ENCODE measurements at regions of chr12 and their contacts with region 1.

Region 1: DNA sequence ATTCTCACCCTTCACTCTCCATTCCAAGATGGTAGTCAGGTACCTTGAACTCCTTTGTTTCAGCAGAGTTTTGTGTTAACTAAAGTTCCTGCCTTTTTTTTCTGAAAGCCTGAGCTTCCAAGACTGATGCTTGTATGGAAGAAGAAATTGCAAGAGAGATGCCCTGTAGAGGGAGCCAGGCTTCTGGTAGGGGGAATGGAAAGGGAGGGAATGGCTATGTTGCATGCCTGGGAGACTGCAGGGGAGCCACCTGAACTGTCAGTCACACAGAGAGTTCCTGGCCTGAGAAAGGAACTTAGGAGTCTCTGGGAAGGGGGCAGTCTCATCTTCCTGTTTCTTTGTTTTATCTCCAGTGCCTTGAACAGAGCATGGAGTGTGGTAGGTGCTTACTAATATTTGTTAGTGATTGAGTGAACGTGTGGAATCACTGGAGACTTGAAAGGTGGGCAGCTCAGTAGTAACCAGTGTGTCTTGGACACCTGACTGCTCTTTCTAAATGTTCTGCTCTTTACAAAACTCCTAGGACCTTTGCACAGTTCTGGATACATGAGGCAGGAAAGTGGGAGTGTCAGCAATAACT is 132.2 kb downstream of the ANO4 start:
- DNase-seq: peak; percentile 54
- H3K4me3 Mint-ChIP-seq: no peak overlapping the region
- H3K27ac Mint-ChIP-seq: no peak overlapping the region
- H3K4me1 Mint-ChIP-seq: peaks cover 13% of the 10 kb centered on the region
- H3K27me3 Mint-ChIP-seq: no peaks in the 10 kb centered on the region
- CTCF ChIP-seq: peak; percentile 36

Region 2: GRCh38 chr12:100845095-100845494 is 81.7 kb before region 1 on chr12:
- CTCF ChIA-PET with region 1: no interaction called
- POLR2A ChIA-PET with region 1: no interaction called
- intact Hi-C with region 1: no loop called
- DNase-seq: peak; percentile 13
- H3K4me3 Mint-ChIP-seq: no peak overlapping the region
- H3K27ac Mint-ChIP-seq: no peak overlapping the region
- H3K4me1 Mint-ChIP-seq: peaks cover 10% of the 10 kb centered on the region
- H3K27me3 Mint-ChIP-seq: no peaks in the 10 kb centered on the region
- CTCF ChIP-seq: no peak

Region 3: DNA sequence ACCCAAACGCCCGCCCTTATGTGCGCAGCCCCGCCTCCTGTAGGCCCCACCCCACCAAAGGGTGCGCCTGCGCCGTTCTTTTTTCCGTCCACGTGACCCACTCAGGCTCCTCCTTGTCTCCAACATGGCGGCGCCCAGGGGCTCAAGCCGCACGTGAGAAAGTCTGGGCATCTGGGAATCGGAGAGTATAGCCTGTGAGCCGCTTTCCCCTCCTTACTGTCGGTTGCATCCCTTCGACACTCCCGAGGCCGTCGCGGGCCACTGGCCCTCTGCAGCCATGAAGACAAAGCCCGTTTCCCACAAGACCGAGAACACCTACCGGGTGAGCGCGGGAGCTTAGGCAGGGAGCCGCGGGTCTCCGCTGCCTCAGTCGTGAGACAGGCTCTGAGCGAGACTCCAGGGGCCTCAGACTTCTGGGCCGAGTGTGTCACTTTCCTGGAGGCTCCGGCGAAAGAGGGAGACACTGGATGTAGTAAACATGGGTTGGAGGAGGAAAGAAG is 353.3 kb after region 1 on chr12 and contains the start of gene UTP20:
- CTCF ChIA-PET with region 1: no interaction called
- POLR2A ChIA-PET with region 1: no interaction called
- intact Hi-C with region 1: loop called (anchors 5 kb)
- DNase-seq: peak; percentile 91
- H3K4me3 Mint-ChIP-seq: peak within 1 kb of the TSS; percentile 84
- H3K27ac Mint-ChIP-seq: peak within 1 kb of the TSS; percentile 86
- H3K4me1 Mint-ChIP-seq: peaks cover 12% of the 10 kb centered on the region
- H3K27me3 Mint-ChIP-seq: no peaks in the 10 kb centered on the region
- CTCF ChIP-seq: no peak
- total RNA-seq, gene UTP20: 10.0 and 15.0 TPM in 2 replicates

Measured in MCF 10A (cell line).